Right ventricle myocardium inferior (tissue), 1 donor: ENCODE measurements at regions of chr19 and their contacts with region 1.

Region 1: DNA sequence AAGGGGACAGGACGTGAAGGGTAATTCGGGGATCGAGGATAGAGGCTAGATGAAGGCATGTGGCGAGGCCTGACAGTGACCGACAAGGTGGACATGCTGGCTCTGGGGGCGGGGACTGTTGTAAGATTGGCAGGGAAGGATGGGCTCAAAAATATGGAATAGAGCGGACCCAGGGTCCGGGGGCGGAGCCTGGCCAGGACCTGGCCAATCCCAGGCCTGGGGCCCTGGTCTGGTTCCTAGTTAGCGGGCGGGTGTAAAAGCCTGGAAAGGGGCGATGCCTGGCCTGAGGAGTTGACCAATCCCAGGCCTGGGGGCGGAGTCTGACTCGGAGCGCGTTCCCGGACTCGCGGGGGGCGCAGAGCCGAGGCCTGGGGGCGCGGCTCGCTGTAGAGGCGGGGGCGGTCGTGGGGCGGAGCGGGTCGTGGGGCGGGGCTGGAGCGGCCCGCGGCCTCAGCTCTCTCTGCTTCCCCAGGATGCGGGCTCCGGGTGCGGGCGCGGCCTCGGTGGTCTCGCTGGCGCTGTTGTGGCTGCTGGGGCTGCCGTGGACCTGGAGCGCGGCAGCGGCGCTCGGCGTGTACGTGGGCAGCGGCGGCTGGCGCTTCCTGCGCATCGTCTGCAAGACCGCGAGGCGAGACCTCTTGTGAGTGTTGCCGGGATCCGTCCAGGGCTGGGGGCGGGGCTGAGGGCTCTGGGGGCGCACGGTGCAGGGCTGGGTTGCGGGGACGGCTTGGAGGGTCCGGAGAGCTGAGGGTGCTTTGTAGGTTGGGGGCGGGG is at the start of gene SLC27A1:
- DNase-seq: peak; percentile 99
- ATAC-seq: peak; percentile 91
- total RNA-seq, gene SLC27A1: 66.2 TPM

Region 2: GRCh38 chr19:17235618-17236377 is 234.5 kb before region 1 on chr19:
- intact Hi-C with region 1: no loop called
- DNase-seq: peak; percentile 87
- ATAC-seq: peak; percentile 86

Region 3: DNA sequence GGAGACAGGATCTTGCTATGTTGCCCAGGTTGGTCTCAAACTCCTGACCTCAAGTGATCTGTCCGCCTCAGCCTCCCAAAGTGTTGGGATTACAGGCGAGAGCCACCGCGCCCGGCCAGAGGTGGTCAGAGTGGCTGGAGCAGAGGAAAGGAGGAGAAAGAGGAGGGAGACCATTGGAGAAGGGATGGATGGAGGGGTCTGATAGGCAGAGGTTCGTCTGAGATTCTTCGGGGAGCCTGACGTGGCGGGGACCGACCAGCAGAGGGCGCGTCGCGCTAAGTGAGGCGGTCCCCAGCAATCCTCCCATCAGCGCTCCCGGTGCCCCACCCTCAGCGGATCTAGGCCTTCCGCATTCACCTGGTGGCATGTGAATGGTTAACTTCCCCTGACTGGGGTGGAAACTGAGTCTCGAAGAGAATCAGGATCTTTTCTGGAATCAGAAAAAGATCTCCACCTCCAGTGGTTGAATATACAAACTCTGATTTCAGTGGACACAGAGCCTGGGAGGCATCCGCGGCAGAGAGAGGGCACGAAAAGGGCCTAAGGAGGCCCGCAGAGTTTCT is 124.1 kb before region 1 on chr19:
- intact Hi-C with region 1: loop called (anchors 5 kb)
- DNase-seq: peak; percentile 89
- ATAC-seq: peak; percentile 72

Region 4: DNA sequence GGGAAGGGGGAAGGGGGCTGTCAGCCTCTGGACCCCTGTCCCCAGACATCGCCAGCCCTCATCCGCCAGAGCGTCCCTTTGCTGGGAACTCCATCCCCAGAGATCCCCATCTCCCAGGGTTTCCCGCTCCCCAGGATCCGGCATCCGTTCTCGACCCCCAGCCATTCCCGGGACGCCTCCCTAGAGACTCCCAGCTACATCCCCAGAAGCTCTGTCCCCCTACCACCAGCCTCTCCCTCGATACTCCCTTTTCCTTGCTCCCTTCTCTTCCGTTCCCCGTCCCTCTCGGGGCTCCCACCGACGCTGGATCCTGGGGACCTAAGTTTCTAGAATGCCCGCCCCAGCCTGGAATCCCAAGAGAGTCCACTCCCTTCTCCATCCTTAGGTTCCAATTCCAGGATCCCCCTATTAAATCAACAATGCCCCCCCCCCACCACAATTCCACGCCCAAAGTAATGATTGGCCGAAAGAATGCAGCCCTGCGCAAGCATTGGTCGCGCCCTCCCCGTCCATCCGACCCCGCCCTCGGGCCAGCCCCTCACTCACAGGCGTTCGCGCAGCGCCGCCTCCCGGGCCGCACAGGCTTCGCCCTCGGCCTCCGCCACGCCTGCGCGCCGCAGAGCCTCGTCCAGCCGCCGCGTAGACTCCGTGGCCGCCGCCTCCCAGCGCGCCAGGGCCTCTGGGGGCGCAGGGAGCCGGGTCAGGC is 79.4 kb before region 1 on chr19:
- intact Hi-C with region 1: loop called (anchors 2 kb)
- DNase-seq: peak; percentile 94
- ATAC-seq: peak; percentile 93

Region 5: GRCh38 chr19:17419621-17420466 is 50.4 kb before region 1 on chr19 and contains the start of gene MVB12A:
- intact Hi-C with region 1: loop called (anchors 5 kb)
- DNase-seq: peak; percentile 99
- ATAC-seq: peak; percentile 99
- total RNA-seq, gene MVB12A: 19.9 TPM

Region 6: GRCh38 chr19:17448131-17448967 is 21.9 kb before region 1 on chr19 and contains the start of gene TMEM221:
- intact Hi-C with region 1: no loop called
- DNase-seq: no peak
- ATAC-seq: peak; percentile 59
- total RNA-seq, gene TMEM221: not detected

Region 7: GRCh38 chr19:17511724-17512573 is 41.7 kb after region 1 on chr19:
- intact Hi-C with region 1: loop called (anchors 5 kb)
- DNase-seq: peak; percentile 94
- ATAC-seq: peak; percentile 82

Region 8: GRCh38 chr19:17555480-17555928 is 85.2 kb after region 1 on chr19 and contains the start of gene COLGALT1:
- intact Hi-C with region 1: loop called (anchors 5 kb)
- DNase-seq: peak; percentile 100
- ATAC-seq: peak; percentile 97
- total RNA-seq, gene COLGALT1: 35.5 TPM